Adrenal gland (tissue), 19 donors: ENCODE measurements at regions of chr11 and their contacts with region 1.

Region 1: DNA sequence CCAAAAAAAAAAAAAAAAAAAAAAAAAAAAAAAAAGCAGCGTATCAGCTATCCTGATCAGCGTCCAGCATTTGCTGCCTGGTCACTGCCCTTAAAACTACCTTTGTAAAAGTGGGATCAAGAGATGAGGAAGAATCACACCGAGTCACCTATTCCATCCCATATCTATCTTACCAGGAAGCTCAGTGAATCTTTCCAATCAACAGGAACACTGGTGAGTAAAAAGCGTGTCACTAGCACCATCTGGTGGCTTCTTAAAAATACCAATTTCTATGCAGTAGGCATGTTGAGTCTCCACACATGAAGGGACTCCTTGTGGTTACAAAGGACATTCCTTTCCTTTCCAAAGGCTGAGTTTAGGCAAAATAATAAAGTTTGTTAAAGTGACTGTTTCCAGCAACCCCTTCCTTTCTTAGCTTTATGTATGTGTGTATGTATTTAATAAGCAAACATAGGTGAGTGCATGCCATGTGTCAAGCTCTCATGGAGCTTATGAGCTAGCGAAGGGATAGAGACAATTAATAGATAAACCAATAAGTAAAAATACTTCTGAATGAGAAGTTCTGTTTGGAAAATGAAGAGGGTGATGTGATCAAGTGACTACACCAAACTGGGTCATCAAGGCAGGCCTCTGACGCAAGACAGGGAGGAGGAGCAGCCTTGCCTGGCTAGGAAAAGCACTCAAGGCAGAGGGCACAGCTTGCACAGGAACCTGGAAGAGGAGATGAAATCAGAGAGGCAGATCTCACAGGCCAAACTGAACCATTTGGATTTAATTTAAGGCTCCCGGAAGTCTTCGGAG is 13.9 kb upstream of the TP53AIP1 start:
- DNase-seq: peak in 6 of 7 donors; percentile 38 to 73 (median 62)
- H3K4me3 ChIP-seq: no peak overlapping the region
- H3K27ac ChIP-seq: no peak overlapping the region
- H3K4me1 ChIP-seq: no peaks in the 10 kb centered on the region
- H3K27me3 ChIP-seq: no peaks in the 10 kb centered on the region
- CTCF ChIP-seq: peak; percentile 57 to 95 (median 84)
- POLR2A ChIP-seq: no peak

Region 2: GRCh38 chr11:128733440-128734102 is 223.0 kb before region 1 on chr11:
- intact Hi-C with region 1: no loop called
- DNase-seq: no peak
- H3K4me3 ChIP-seq: no peak overlapping the region
- H3K27ac ChIP-seq: peak overlapping the region in 1 of 5 donors; percentile 63
- H3K4me1 ChIP-seq: peaks cover 0 to 26% of the 10 kb centered on the region in 2 donors
- H3K27me3 ChIP-seq: no peaks in the 10 kb centered on the region
- CTCF ChIP-seq: no peak
- POLR2A ChIP-seq: no peak

Region 3: DNA sequence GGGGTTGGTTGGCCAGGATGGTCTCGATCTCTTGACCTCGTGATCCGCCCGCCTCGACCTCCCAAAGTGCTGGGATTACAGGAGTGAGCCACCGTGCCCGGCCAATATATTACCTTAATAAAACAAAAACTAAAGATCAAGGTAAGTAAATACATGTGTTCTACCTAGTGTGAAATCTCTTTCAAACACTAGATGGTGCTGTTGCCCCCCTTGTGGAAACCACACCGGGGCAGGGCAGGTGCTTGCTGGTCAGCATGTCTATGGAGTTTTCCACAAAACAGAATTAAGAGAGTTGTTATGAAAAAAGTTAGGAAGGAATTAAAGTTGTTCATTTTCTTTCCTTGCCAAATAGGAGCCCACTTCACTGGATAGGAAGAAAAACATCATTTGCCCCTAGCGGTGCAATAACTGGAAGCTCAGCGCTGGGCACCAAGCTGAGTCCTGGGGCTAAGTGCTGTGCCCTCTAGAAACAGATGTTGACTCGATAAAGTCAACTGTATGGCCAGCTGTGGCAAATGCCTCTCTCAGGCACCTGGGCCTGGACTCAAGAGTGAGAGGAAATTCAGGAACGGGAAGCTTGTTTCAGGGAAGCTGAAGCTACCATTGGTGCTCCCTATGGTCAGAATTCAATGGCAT is 71.8 kb before region 1 on chr11:
- intact Hi-C with region 1: loop called (anchors 2 kb)
- DNase-seq: peak; percentile 58 to 86 (median 76)
- H3K4me3 ChIP-seq: no peak overlapping the region
- H3K27ac ChIP-seq: no peak overlapping the region
- H3K4me1 ChIP-seq: peaks cover 0 to under 1% of the 10 kb centered on the region in 2 donors
- H3K27me3 ChIP-seq: no peaks in the 10 kb centered on the region
- CTCF ChIP-seq: peak; percentile 81 to 94 (median 92)
- POLR2A ChIP-seq: no peak

Region 4: GRCh38 chr11:128890543-128891368 is 65.8 kb before region 1 on chr11 and contains the start of gene KCNJ5:
- intact Hi-C with region 1: loop called (anchors 2 kb)
- DNase-seq: peak; percentile 63 to 84 (median 77)
- H3K4me3 ChIP-seq: peak within 1 kb of the TSS in 3 of 4 donors; percentile 3 to 82 (median 66)
- H3K27ac ChIP-seq: peak within 1 kb of the TSS; percentile 37 to 92 (median 71)
- H3K4me1 ChIP-seq: peaks cover 41 to 46% of the 10 kb centered on the region in 2 donors
- H3K27me3 ChIP-seq: no peaks in the 10 kb centered on the region
- CTCF ChIP-seq: no peak
- POLR2A ChIP-seq: peak in 1 of 2 donors; percentile 47
- total RNA-seq, gene KCNJ5: 45.2 to 299 (median 115) TPM

Region 5: GRCh38 chr11:129041611-129042018 is 85.0 kb after region 1 on chr11:
- intact Hi-C with region 1: no loop called
- DNase-seq: no peak
- H3K4me3 ChIP-seq: no peak overlapping the region
- H3K27ac ChIP-seq: no peak overlapping the region
- H3K4me1 ChIP-seq: no peaks in the 10 kb centered on the region
- H3K27me3 ChIP-seq: no peaks in the 10 kb centered on the region
- CTCF ChIP-seq: no peak
- POLR2A ChIP-seq: no peak

Region 6: DNA sequence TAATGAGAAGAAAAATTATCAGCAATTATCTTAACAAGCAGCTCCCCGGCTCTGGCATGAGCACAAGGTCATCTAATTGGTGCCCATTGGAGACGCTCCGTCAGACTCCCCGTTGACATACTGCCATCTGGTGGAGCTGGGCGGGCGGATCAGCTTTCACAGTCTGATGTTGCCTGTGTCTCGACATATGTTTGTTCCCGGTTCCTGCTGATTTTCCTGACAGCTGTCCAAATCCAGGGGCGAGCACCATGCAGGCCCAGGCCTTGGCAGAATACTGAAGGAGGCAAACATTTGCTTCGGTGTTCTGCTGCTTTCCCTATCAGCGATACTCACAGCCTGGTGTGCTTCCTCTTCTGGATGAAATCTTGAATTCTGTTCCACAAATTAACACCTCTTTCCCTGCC is 375.3 kb after region 1 on chr11:
- intact Hi-C with region 1: loop called in 1 of 2 experiments (anchors 10 kb)
- DNase-seq: peak; percentile 82 to 95 (median 85)
- H3K4me3 ChIP-seq: no peak overlapping the region
- H3K27ac ChIP-seq: no peak overlapping the region
- H3K4me1 ChIP-seq: no peaks in the 10 kb centered on the region
- H3K27me3 ChIP-seq: no peaks in the 10 kb centered on the region
- CTCF ChIP-seq: peak; percentile 68 to 93 (median 88)
- POLR2A ChIP-seq: no peak